ENCODE measurements at regions of chr10 and their contacts with region 1.

Region 1: GRCh38 chr10:70815504-70816219 is at the start of gene SGPL1:
- DNase-seq: peak; percentile 90
- H3K4me3 ChIP-seq: peak within 1 kb of the TSS; percentile 65 to 87 (median 76)
- H3K27ac ChIP-seq: peak within 1 kb of the TSS; percentile 94 to 99 (median 96)
- H3K4me1 ChIP-seq: peaks cover 9 to 19% (median 11%) of the 10 kb centered on the region in 4 donors
- H3K27me3 ChIP-seq: no peaks in the 10 kb centered on the region
- CTCF ChIP-seq: peak; percentile 84 to 97 (median 91)
- EP300 ChIP-seq: no peak
- POLR2A ChIP-seq: peak; percentile 52
- total RNA-seq, gene SGPL1: 24.9 to 65.4 (median 61.3) TPM

Region 2: GRCh38 chr10:70874045-70874444 is 58.4 kb after region 1 on chr10:
- in situ Hi-C with region 1: loop called in 2 of 4 experiments (anchors 5 to 10 kb)
- intact Hi-C with region 1: loop called (anchors 5 kb)
- DNase-seq: no peak
- H3K4me3 ChIP-seq: no peak overlapping the region
- H3K27ac ChIP-seq: no peak overlapping the region
- H3K4me1 ChIP-seq: no peaks in the 10 kb centered on the region
- H3K27me3 ChIP-seq: no peaks in the 10 kb centered on the region
- CTCF ChIP-seq: no peak
- EP300 ChIP-seq: no peak
- POLR2A ChIP-seq: no peak

Region 3: GRCh38 chr10:70880077-70880534 is 64.4 kb after region 1 on chr10:
- in situ Hi-C with region 1: loop called in 3 of 4 experiments (anchors 5 to 10 kb)
- intact Hi-C with region 1: loop called (anchors 5 kb)
- DNase-seq: peak; percentile 82
- H3K4me3 ChIP-seq: no peak overlapping the region
- H3K27ac ChIP-seq: no peak overlapping the region
- H3K4me1 ChIP-seq: no peaks in the 10 kb centered on the region
- H3K27me3 ChIP-seq: no peaks in the 10 kb centered on the region
- CTCF ChIP-seq: peak; percentile 90 to 93 (median 92)
- EP300 ChIP-seq: no peak
- POLR2A ChIP-seq: no peak

Region 4: DNA sequence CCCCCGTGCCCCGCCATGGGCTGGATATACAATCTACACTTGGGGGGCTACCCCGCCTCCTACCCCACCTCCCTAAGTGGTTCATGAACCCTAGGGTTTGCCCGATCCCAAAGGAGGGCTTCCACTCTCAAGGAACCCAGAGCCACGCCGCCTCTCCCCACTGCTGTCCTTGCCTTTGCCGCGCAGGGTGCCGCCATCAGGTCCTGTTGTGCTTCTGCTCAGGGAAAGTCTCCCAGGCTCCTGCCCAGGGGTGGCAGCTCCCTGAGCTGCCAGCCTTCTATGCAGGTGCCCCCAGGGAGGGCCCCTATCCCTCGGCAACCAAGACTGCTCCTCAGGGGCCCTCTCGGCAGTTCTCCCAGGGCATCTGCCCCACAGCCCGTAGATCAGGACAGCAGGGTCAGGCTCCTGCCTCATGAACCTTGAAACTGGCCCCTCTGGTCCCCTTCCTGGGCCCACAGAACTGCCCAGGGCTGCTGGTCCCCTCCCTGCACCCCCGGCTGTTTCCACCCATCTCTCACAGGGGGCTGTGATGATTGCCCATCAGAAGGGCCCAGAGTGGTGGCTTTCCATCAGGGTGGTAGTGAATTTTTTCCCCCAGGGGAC is 85.7 kb after region 1 on chr10:
- in situ Hi-C with region 1: no loop called
- intact Hi-C with region 1: no loop called
- DNase-seq: peak; percentile 3
- H3K4me3 ChIP-seq: no peak overlapping the region
- H3K27ac ChIP-seq: no peak overlapping the region
- H3K4me1 ChIP-seq: peaks cover 0 to 5% (median 0%) of the 10 kb centered on the region in 4 donors
- H3K27me3 ChIP-seq: no peaks in the 10 kb centered on the region
- CTCF ChIP-seq: no peak
- EP300 ChIP-seq: no peak
- POLR2A ChIP-seq: no peak

Measured in transverse colon (tissue), 4 donors.